ENCODE measurements at regions of chr22 and their contacts with region 1.

Region 1: DNA sequence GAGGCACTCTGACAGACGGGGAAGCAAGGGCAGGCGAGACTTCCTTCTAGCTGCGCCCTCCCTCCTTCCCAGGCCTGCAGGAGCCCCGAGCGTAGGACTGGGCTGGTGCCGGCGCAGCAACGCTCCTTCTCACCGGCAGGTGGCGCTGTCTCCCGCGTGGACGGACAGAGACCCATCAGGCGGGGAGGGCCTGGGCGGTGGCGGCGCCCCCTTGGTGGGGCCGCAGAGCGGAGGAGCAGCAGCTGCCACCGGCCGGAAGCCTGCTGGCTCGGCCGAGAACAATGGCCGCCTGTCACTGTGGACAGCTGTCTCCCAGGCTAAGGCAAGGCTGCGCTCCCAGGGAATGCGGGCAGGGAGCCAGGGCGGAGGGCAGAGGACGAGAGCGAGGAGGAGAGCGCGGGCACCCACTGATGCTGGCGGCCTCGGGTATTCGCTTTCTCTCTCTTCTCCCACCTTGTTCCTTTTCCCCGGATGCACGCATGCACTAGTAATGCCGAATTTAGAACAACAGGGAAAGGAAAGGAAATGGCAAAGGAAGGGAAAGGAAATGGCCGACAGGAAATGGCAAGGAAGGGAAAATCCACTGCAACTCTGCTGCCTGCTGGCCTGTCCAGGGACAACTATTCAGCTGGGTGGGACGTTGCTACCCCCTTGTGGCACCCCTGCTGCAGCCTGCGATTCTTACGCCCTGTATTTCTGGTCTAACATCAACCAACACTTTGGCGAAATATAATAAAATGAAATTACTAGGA is 14.4 kb downstream of the PPM1F start:
- DNase-seq: peak; percentile 93

Region 2: GRCh38 chr22:21712894-21713712 is 225.1 kb before region 1 on chr22:
- in situ Hi-C with region 1: loop called (anchors 25 kb)
- DNase-seq: peak; percentile 92

Region 3: DNA sequence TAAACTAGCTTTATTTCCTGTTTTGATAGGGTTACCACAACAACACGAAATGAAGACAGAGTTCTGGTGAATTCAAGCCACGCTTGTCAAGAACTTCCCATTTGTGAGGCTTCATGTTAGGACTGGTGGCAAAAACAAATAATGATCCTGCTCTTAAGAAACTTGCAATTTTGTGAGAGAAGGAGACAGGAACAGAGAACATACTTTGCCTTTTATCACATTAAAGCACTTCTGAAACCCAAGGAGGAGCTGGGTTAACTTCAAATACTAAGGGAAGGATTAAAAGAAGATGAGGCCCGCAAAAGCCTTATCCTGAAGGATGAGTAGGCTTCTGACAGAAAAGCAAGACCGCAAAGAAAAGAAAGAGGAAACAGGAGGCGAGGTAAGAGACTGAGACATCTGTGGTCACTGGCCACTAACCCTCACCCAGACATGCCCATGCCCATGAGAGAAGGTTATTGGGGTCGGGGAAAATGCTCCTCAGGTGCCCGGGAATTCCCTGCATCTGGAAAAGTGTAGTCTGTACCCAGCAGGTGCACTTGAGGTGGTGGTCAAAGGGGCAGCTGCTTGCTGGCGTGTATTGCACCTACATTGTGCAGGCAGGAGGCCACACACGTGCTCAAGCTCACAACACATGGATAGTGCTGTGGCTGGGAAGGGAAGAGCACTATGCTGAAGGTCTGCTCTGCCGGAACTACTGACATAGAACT is 121.3 kb before region 1 on chr22:
- in situ Hi-C with region 1: loop called (anchors 25 kb)
- DNase-seq: no peak

Region 4: GRCh38 chr22:21837248-21837979 is 100.8 kb before region 1 on chr22:
- in situ Hi-C with region 1: no loop called
- DNase-seq: peak; percentile 69

Measured in SK-MEL-5 (cell line).